ENCODE measurements at regions of chr9 and their contacts with region 1.

Region 1: GRCh38 chr9:70258692-70259511 is at the start of gene SMC5:
- DNase-seq: peak; percentile 89 to 96 (median 94)
- ATAC-seq: peak; percentile 94
- H3K4me3 ChIP-seq: peak within 1 kb of the TSS; percentile 78
- H3K4me1 ChIP-seq: peaks cover 28% of the 10 kb centered on the region
- CTCF ChIP-seq: no peak
- total RNA-seq, gene SMC5: 23.7 to 32.1 (median 31.7) TPM

Region 2: GRCh38 chr9:70195456-70195855 is 63.4 kb before region 1 on chr9:
- intact Hi-C with region 1: loop called in 1 of 2 experiments (anchors 10 kb)
- DNase-seq: no peak
- ATAC-seq: no peak
- H3K4me3 ChIP-seq: no peak overlapping the region
- H3K4me1 ChIP-seq: no peaks in the 10 kb centered on the region
- CTCF ChIP-seq: no peak